ENCODE measurements at regions of chr15 and their contacts with region 1.

Region 1: GRCh38 chr15:98850961-98851573 is 156.5 kb downstream of the PGPEP1L start:
- DNase-seq: no peak
- H3K4me3 ChIP-seq: peak overlapping the region; percentile 10
- H3K27ac ChIP-seq: peak overlapping the region; percentile 80
- H3K27me3 ChIP-seq: no peaks in the 10 kb centered on the region
- CTCF ChIP-seq: peak; percentile 87

Region 2: DNA sequence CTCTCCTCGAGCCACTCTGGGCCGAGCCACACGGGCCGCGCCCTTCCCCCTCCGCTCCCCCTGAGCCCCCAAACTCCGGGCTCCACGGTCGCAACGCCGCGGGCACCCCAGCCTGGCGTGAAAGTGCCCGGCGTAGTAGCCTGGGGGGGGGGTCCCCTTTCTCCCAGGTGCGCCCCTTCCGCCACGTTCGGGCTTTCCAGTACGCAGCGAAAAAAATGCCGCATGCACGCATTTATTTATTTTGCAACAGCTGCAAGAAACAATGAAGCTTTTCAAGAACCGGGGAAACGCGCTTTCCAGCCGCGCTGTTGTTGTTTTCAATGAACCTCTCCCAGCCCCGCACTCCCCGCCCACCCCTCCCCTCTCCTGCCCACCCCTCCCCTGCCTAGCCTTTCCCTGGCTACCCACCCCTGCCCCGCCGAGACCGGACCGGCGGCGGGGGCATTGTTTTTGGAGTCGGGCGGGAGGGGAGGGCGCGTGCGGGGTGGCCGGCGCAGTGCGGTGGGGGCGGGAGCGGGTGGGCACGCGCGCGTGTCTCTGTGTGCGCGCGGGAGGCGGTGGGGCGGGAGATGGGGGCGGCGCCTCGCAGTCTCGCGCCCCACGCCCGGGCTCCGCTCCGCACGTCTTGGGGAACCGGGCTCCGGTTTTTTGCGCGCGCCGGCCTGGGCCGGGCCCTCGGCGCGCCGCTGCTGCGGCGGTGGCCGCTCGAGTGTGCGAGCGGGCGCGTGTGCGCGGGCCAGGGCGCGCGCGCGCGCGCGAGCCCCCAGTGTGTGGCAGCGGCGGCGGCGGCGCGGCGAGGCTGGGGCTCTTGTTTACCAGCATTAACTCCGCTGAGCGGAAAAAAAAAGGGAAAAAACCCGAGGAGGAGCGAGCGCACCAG is 203.1 kb before region 1 on chr15 and contains the start of gene IGF1R:
- CTCF ChIA-PET with region 1: interaction called, 11 read pairs
- POLR2A ChIA-PET with region 1: interaction called, 5 read pairs
- DNase-seq: peak; percentile 54
- H3K4me3 ChIP-seq: peak within 1 kb of the TSS; percentile 88
- H3K27ac ChIP-seq: peak within 1 kb of the TSS; percentile 80
- H3K27me3 ChIP-seq: peaks cover 17% of the 10 kb centered on the region
- CTCF ChIP-seq: no peak
- polyA plus RNA-seq, gene IGF1R: 21.6 and 35.4 TPM in 2 replicates

Region 3: GRCh38 chr15:98658831-98659699 is 192.0 kb before region 1 on chr15:
- CTCF ChIA-PET with region 1: interaction called, 17 read pairs
- POLR2A ChIA-PET with region 1: no interaction called
- DNase-seq: no peak
- H3K4me3 ChIP-seq: no peak overlapping the region
- H3K27ac ChIP-seq: no peak overlapping the region
- H3K27me3 ChIP-seq: no peaks in the 10 kb centered on the region
- CTCF ChIP-seq: peak; percentile 93

Region 4: DNA sequence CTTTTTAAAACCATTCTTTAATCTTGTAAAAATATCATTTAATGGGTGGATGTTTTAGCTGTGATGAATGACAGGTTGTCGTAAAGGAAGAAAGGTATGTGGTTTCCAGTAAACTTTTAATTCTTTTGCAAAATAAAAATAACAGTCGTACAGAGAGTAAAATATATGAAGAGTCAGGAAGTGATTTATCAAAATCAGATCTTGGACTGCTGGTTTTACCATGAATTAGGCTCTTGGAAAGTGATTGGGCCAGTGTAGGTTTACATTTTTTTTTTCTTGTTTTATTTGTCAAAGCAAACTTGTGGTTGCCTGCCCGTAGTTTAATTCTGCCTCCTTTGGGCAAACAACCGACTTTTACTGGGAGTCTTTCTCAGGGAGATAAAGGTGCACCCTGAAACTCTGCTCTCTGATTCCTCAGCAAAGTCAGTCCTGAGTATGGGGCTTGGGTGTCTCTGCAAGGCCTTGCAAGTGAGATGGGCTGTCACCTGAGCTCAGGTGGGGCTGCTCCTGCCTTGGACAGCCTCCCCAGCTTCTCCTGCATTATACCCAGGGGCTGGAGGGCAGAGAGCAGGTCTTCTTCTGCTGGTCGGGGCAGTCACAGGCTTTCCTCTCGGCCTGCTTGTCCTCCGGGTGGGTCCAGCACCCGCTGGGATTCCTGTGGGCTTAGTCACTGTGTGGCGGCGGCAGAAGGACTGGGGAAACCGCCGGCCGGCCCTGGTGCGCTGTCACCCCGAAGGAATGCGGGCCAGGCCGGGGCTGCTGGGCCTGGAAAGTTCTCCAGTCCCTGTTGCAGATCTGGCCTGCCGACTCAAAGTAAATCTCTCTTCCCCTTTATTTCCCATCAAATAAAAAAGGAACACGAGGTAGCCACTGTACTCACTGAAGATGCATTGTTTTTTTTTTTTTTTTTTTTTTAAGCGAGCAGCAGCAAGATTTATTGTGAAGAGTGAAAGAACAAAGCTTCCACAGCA is 123.7 kb before region 1 on chr15:
- CTCF ChIA-PET with region 1: interaction called, 11 read pairs
- POLR2A ChIA-PET with region 1: no interaction called
- DNase-seq: peak; percentile 79
- H3K4me3 ChIP-seq: peak overlapping the region; percentile 37
- H3K27ac ChIP-seq: peak overlapping the region; percentile 95
- H3K27me3 ChIP-seq: no peaks in the 10 kb centered on the region
- CTCF ChIP-seq: no peak

Region 5: GRCh38 chr15:98954411-98954810 is 103.3 kb after region 1 on chr15:
- CTCF ChIA-PET with region 1: no interaction called
- POLR2A ChIA-PET with region 1: no interaction called
- DNase-seq: peak; percentile 37
- H3K4me3 ChIP-seq: no peak overlapping the region
- H3K27ac ChIP-seq: peak overlapping the region; percentile 72
- H3K27me3 ChIP-seq: no peaks in the 10 kb centered on the region
- CTCF ChIP-seq: no peak

Measured in AG04450 (cell line).